ENCODE measurements at regions of chr4 and their contacts with region 1.

Region 1: DNA sequence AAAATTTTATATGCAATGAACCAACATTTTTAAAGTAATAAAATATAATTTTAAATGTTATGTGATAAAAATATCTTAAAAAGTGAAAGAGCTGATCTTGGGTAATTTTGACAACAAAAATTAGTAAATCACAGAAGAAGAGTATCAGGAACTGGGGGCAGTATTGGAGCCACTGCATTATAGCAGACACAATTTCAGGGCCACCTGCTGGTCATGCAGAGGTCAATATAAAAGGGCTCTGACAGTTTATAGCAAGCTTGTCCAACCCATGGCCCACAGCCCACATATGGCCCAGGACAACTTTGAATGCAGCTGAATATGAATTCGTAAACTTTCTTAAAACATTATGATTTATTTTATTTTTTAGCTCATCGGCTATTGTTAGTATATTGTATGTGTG is 13.0 kb upstream of the LEF1 start:
- DNase-seq: no peak
- ATAC-seq: peak; percentile 93
- H3K4me3 ChIP-seq: no peak overlapping the region
- H3K27ac ChIP-seq: no peak overlapping the region
- H3K4me1 ChIP-seq: no peaks in the 10 kb centered on the region
- H3K27me3 ChIP-seq: no peaks in the 10 kb centered on the region; a peak in 2 of 4 replicates
- CTCF ChIP-seq: peak; percentile 38 to 48 (median 46); a peak in 5 of 6 replicates
- EP300 ChIP-seq: no peak
- POLR2A ChIP-seq: no peak
- RAD21 ChIP-seq: peak; percentile 55

Region 2: DNA sequence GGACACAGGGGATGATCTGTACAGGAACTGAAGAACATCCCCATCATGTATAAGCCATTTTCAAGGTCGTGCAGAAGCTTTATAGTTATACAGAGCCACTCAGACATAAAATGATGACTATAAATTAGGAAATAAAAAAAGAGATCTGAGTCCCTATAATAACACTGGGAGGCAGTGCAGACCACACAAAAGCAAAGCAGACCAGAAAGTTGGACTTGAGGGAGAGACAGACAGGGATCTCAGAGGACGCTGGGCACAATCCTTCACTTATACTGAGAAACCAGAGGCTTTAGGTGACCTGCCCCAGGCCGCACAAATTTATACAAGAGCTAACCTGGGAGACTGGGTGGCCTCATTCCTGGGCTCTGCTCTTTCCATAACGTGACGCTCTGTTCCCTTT is 121.5 kb before region 1 on chr4:
- CTCF ChIA-PET with region 1: interaction called, 10 read pairs
- POLR2A ChIA-PET with region 1: no interaction called
- RAD21 ChIA-PET with region 1: interaction called, 3 read pairs
- SMC1A ChIA-PET with region 1: interaction called, 9 read pairs
- in situ Hi-C with region 1: no loop called
- intact Hi-C with region 1: no loop called
- DNase-seq: no peak
- ATAC-seq: no peak; the same call in 2 of the 3 replicates
- H3K4me3 ChIP-seq: no peak overlapping the region
- H3K27ac ChIP-seq: no peak overlapping the region
- H3K4me1 ChIP-seq: no peaks in the 10 kb centered on the region
- H3K27me3 ChIP-seq: no peaks in the 10 kb centered on the region
- CTCF ChIP-seq: peak in 2 of 3 experiments; percentile 23 to 51; a peak in 4 of 6 replicates
- EP300 ChIP-seq: no peak
- POLR2A ChIP-seq: no peak
- RAD21 ChIP-seq: peak; percentile 67

Region 3: GRCh38 chr4:108215055-108215454 is 33.4 kb after region 1 on chr4:
- CTCF ChIA-PET with region 1: no interaction called
- POLR2A ChIA-PET with region 1: no interaction called
- RAD21 ChIA-PET with region 1: no interaction called
- SMC1A ChIA-PET with region 1: no interaction called
- in situ Hi-C with region 1: no loop called
- intact Hi-C with region 1: no loop called
- DNase-seq: no peak
- ATAC-seq: no peak
- H3K4me3 ChIP-seq: no peak overlapping the region
- H3K27ac ChIP-seq: no peak overlapping the region
- H3K4me1 ChIP-seq: no peaks in the 10 kb centered on the region
- H3K27me3 ChIP-seq: no peaks in the 10 kb centered on the region
- CTCF ChIP-seq: no peak
- EP300 ChIP-seq: no peak
- POLR2A ChIP-seq: no peak
- RAD21 ChIP-seq: no peak

Region 4: GRCh38 chr4:108519911-108520601 is 338.4 kb after region 1 on chr4:
- CTCF ChIA-PET with region 1: no interaction called
- POLR2A ChIA-PET with region 1: no interaction called
- RAD21 ChIA-PET with region 1: no interaction called
- SMC1A ChIA-PET with region 1: no interaction called
- in situ Hi-C with region 1: no loop called
- intact Hi-C with region 1: no loop called
- DNase-seq: no peak
- ATAC-seq: no peak
- H3K4me3 ChIP-seq: no peak overlapping the region
- H3K27ac ChIP-seq: no peak overlapping the region
- H3K4me1 ChIP-seq: no peaks in the 10 kb centered on the region
- H3K27me3 ChIP-seq: no peaks in the 10 kb centered on the region; a peak in 1 of 4 replicates
- CTCF ChIP-seq: no peak
- EP300 ChIP-seq: no peak
- POLR2A ChIP-seq: no peak
- RAD21 ChIP-seq: no peak

Region 5: GRCh38 chr4:108560616-108561015 is 378.9 kb after region 1 on chr4:
- CTCF ChIA-PET with region 1: no interaction called
- POLR2A ChIA-PET with region 1: no interaction called
- RAD21 ChIA-PET with region 1: no interaction called
- SMC1A ChIA-PET with region 1: no interaction called
- in situ Hi-C with region 1: no loop called
- intact Hi-C with region 1: loop called (anchors 10 kb)
- DNase-seq: no peak
- ATAC-seq: no peak
- H3K4me3 ChIP-seq: no peak overlapping the region
- H3K27ac ChIP-seq: no peak overlapping the region
- H3K4me1 ChIP-seq: no peaks in the 10 kb centered on the region
- H3K27me3 ChIP-seq: no peaks in the 10 kb centered on the region
- CTCF ChIP-seq: no peak
- EP300 ChIP-seq: no peak
- POLR2A ChIP-seq: no peak
- RAD21 ChIP-seq: no peak